IMR-90 (cell line): ENCODE measurements at regions of chr2 and their contacts with region 1.

Region 1: GRCh38 chr2:151771599-151772358 is 37.5 kb upstream of the NEB start:
- DNase-seq: peak; percentile 94
- ATAC-seq: peak; percentile 90
- H3K4me3 ChIP-seq: no peak overlapping the region
- H3K27ac ChIP-seq: no peak overlapping the region
- H3K4me1 ChIP-seq: peaks cover 9% of the 10 kb centered on the region
- H3K27me3 ChIP-seq: no peaks in the 10 kb centered on the region
- CTCF ChIP-seq: no peak
- POLR2A ChIP-seq: no peak
- RAD21 ChIP-seq: no peak

Region 2: GRCh38 chr2:150376565-150377335 is 1395.0 kb before region 1 on chr2:
- CTCF ChIA-PET with region 1: no interaction called
- POLR2A ChIA-PET with region 1: no interaction called
- dilution Hi-C with region 1: no loop called
- in situ Hi-C with region 1: no loop called
- intact Hi-C with region 1: no loop called
- DNase-seq: peak; percentile 34
- ATAC-seq: peak; percentile 51
- H3K4me3 ChIP-seq: no peak overlapping the region
- H3K27ac ChIP-seq: no peak overlapping the region
- H3K4me1 ChIP-seq: no peaks in the 10 kb centered on the region; the same call in 1 of the 2 replicates
- H3K27me3 ChIP-seq: no peaks in the 10 kb centered on the region
- CTCF ChIP-seq: no peak
- POLR2A ChIP-seq: no peak
- RAD21 ChIP-seq: no peak

Region 3: GRCh38 chr2:151828143-151828889 is 56.5 kb after region 1 on chr2 and contains the start of gene ARL5A:
- CTCF ChIA-PET with region 1: no interaction called
- POLR2A ChIA-PET with region 1: no interaction called
- dilution Hi-C with region 1: no loop called
- in situ Hi-C with region 1: no loop called
- intact Hi-C with region 1: loop called (anchors 5 kb)
- DNase-seq: peak; percentile 93
- ATAC-seq: peak; percentile 97
- H3K4me3 ChIP-seq: peak within 1 kb of the TSS; percentile 80
- H3K27ac ChIP-seq: peak within 1 kb of the TSS; percentile 53
- H3K4me1 ChIP-seq: peaks cover 4% of the 10 kb centered on the region
- H3K27me3 ChIP-seq: no peaks in the 10 kb centered on the region
- CTCF ChIP-seq: no peak
- POLR2A ChIP-seq: peak; percentile 72; the same call in 1 of the 2 replicates
- RAD21 ChIP-seq: no peak
- total RNA-seq, gene ARL5A: 45.5 and 89.2 TPM in 2 replicates